WTC11 (cell line): ENCODE measurements at regions of chr17 and their contacts with region 1.

Region 1: GRCh38 chr17:45247429-45248131 is 14.3 kb downstream of the SPATA32 start:
- DNase-seq: peak; percentile 99
- ATAC-seq: peak; percentile 87
- H3K4me3 Mint-ChIP-seq: peak overlapping the region; percentile 83
- H3K27ac Mint-ChIP-seq: peak overlapping the region; percentile 80
- H3K4me1 Mint-ChIP-seq: peaks cover 21% of the 10 kb centered on the region
- H3K27me3 Mint-ChIP-seq: peaks cover 2% of the 10 kb centered on the region
- CTCF ChIP-seq: no peak

Region 2: GRCh38 chr17:45031231-45032173 is 216.1 kb before region 1 on chr17:
- CTCF ChIA-PET with region 1: no interaction called
- POLR2A ChIA-PET with region 1: no interaction called
- DNase-seq: no peak
- ATAC-seq: no peak
- H3K4me3 Mint-ChIP-seq: no peak overlapping the region
- H3K27ac Mint-ChIP-seq: no peak overlapping the region
- H3K4me1 Mint-ChIP-seq: no peaks in the 10 kb centered on the region
- H3K27me3 Mint-ChIP-seq: no peaks in the 10 kb centered on the region
- CTCF ChIP-seq: no peak

Region 3: GRCh38 chr17:45172454-45173286 is 74.9 kb before region 1 on chr17:
- CTCF ChIA-PET with region 1: interaction called, 12 read pairs
- POLR2A ChIA-PET with region 1: no interaction called
- DNase-seq: peak; percentile 38
- ATAC-seq: peak; percentile 20
- H3K4me3 Mint-ChIP-seq: peak overlapping the region; percentile 5; the same call in 1 of the 2 replicates
- H3K27ac Mint-ChIP-seq: peak overlapping the region; percentile 98
- H3K4me1 Mint-ChIP-seq: peaks cover 29% of the 10 kb centered on the region
- H3K27me3 Mint-ChIP-seq: no peaks in the 10 kb centered on the region
- CTCF ChIP-seq: no peak

Region 4: GRCh38 chr17:45235416-45236281 is 11.9 kb before region 1 on chr17:
- CTCF ChIA-PET with region 1: interaction called, 179 read pairs
- POLR2A ChIA-PET with region 1: interaction called, 3 read pairs
- DNase-seq: peak; percentile 94
- ATAC-seq: peak; percentile 69
- H3K4me3 Mint-ChIP-seq: no peak overlapping the region
- H3K27ac Mint-ChIP-seq: no peak overlapping the region
- H3K4me1 Mint-ChIP-seq: peaks cover 9% of the 10 kb centered on the region
- H3K27me3 Mint-ChIP-seq: peaks cover 63% of the 10 kb centered on the region
- CTCF ChIP-seq: peak; percentile 81

Region 5: GRCh38 chr17:45265821-45266220 is 18.2 kb after region 1 on chr17:
- CTCF ChIA-PET with region 1: interaction called, 29 read pairs
- POLR2A ChIA-PET with region 1: no interaction called
- DNase-seq: no peak
- ATAC-seq: no peak
- H3K4me3 Mint-ChIP-seq: no peak overlapping the region
- H3K27ac Mint-ChIP-seq: no peak overlapping the region
- H3K4me1 Mint-ChIP-seq: peaks cover 9% of the 10 kb centered on the region; the same call in 1 of the 2 replicates
- H3K27me3 Mint-ChIP-seq: peaks cover 7% of the 10 kb centered on the region
- CTCF ChIP-seq: no peak

Region 6: GRCh38 chr17:45428050-45428617 is 180.6 kb after region 1 on chr17:
- CTCF ChIA-PET with region 1: interaction called, 20 read pairs
- POLR2A ChIA-PET with region 1: no interaction called
- DNase-seq: peak; percentile 86
- ATAC-seq: peak; percentile 15
- H3K4me3 Mint-ChIP-seq: peak overlapping the region; percentile 67
- H3K27ac Mint-ChIP-seq: no peak overlapping the region
- H3K4me1 Mint-ChIP-seq: peaks cover 36% of the 10 kb centered on the region
- H3K27me3 Mint-ChIP-seq: peaks cover 57% of the 10 kb centered on the region
- CTCF ChIP-seq: peak; percentile 99

Region 7: GRCh38 chr17:45648642-45649041 is 401.1 kb after region 1 on chr17:
- CTCF ChIA-PET with region 1: no interaction called
- POLR2A ChIA-PET with region 1: no interaction called
- DNase-seq: peak; percentile 80
- ATAC-seq: peak; percentile 85
- H3K4me3 Mint-ChIP-seq: no peak overlapping the region
- H3K27ac Mint-ChIP-seq: no peak overlapping the region
- H3K4me1 Mint-ChIP-seq: peaks cover 16% of the 10 kb centered on the region
- H3K27me3 Mint-ChIP-seq: no peaks in the 10 kb centered on the region
- CTCF ChIP-seq: peak; percentile 70

Region 8: GRCh38 chr17:45660474-45660873 is 412.9 kb after region 1 on chr17:
- CTCF ChIA-PET with region 1: no interaction called
- POLR2A ChIA-PET with region 1: no interaction called
- DNase-seq: peak; percentile 30
- ATAC-seq: peak; percentile 73
- H3K4me3 Mint-ChIP-seq: no peak overlapping the region
- H3K27ac Mint-ChIP-seq: no peak overlapping the region
- H3K4me1 Mint-ChIP-seq: no peaks in the 10 kb centered on the region
- H3K27me3 Mint-ChIP-seq: no peaks in the 10 kb centered on the region
- CTCF ChIP-seq: no peak